ENCODE measurements at regions of chr18 and their contacts with region 1.

Region 1: GRCh38 chr18:71583291-71583690 is 960.9 kb downstream of the CBLN2 start:
- DNase-seq: no peak
- H3K4me3 ChIP-seq: peak overlapping the region in 1 of 4 donors; percentile 9
- H3K27ac ChIP-seq: no peak overlapping the region
- H3K4me1 ChIP-seq: peaks cover 0 to 5% (median 2%) of the 10 kb centered on the region in 4 donors
- H3K27me3 ChIP-seq: no peaks in the 10 kb centered on the region
- CTCF ChIP-seq: no peak
- EP300 ChIP-seq: no peak
- POLR2A ChIP-seq: no peak

Region 2: DNA sequence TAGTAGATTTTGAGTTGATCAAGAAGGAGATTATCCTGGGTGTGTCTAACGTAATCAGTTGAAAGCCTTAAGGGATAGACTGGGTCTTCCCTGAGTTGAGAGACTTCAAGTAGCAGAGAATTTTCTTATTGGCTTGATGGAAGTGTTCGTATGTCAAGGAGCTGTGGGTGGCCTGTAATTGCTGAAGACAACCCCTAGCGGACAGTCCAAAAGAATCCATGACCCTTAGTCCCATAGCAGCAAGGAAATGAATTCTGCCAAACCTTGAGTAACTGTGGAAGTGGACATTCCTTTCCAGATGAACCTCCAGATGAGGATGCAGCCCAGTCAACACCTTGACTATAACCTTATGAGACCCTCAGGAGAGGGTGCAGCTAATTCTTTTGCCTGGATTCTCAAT is 508.1 kb before region 1 on chr18:
- intact Hi-C with region 1: no loop called
- DNase-seq: no peak
- H3K4me3 ChIP-seq: no peak overlapping the region
- H3K27ac ChIP-seq: no peak overlapping the region
- H3K4me1 ChIP-seq: no peaks in the 10 kb centered on the region
- H3K27me3 ChIP-seq: no peaks in the 10 kb centered on the region
- CTCF ChIP-seq: no peak
- EP300 ChIP-seq: no peak
- POLR2A ChIP-seq: no peak

Region 3: DNA sequence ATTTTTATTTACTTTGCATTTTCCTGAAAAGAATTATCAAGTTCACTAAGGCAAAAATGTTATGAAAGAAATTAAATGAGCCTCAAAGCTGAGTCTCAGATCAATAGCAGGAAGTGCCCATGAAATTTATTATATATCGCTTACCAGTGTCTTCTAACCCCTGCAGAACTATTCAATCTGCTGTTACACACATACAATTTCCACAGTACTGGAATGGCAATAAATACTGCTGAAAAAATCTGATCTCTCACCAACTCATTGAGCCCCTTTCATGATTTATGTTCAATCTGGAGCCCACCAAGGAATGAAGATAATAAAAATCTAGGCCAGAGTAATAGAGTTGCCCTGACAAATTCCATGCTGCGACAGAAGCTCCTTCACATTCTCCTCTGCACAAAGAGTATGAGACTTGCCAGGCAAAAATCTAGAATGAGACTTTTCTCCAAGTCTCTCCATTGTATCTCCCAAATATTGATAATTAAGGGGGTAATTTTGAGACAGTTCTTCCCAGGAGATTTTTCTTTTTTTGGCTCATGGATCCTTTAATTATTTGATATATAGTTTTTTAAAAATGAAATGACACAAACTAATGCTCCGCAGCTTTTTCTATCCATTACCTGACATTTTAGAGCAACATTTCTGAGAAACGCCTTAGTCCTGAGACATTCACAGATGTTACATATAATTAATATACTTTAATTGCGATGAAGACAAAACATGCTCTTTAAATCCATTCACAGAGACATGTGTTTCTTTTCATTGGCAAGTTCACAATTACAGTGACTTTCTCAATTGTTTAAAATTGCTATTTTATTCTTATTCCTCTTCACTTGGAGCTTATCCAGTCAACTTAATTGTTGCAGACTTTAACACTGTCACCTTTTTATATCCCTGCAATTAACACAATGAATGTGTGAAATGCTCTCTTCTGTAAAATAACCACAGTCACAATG is 59.5 kb before region 1 on chr18:
- intact Hi-C with region 1: loop called (anchors 10 kb)
- DNase-seq: no peak
- H3K4me3 ChIP-seq: no peak overlapping the region
- H3K27ac ChIP-seq: no peak overlapping the region
- H3K4me1 ChIP-seq: no peaks in the 10 kb centered on the region
- H3K27me3 ChIP-seq: no peaks in the 10 kb centered on the region
- CTCF ChIP-seq: no peak
- EP300 ChIP-seq: no peak
- POLR2A ChIP-seq: no peak

Region 4: GRCh38 chr18:71541633-71542032 is 41.7 kb before region 1 on chr18:
- intact Hi-C with region 1: no loop called
- DNase-seq: no peak
- H3K4me3 ChIP-seq: no peak overlapping the region
- H3K27ac ChIP-seq: no peak overlapping the region
- H3K4me1 ChIP-seq: no peaks in the 10 kb centered on the region
- H3K27me3 ChIP-seq: no peaks in the 10 kb centered on the region
- CTCF ChIP-seq: no peak
- EP300 ChIP-seq: no peak
- POLR2A ChIP-seq: no peak